Right cardiac atrium (tissue), 5 donors: ENCODE measurements at regions of chr12 and their contacts with region 1.

Region 1: DNA sequence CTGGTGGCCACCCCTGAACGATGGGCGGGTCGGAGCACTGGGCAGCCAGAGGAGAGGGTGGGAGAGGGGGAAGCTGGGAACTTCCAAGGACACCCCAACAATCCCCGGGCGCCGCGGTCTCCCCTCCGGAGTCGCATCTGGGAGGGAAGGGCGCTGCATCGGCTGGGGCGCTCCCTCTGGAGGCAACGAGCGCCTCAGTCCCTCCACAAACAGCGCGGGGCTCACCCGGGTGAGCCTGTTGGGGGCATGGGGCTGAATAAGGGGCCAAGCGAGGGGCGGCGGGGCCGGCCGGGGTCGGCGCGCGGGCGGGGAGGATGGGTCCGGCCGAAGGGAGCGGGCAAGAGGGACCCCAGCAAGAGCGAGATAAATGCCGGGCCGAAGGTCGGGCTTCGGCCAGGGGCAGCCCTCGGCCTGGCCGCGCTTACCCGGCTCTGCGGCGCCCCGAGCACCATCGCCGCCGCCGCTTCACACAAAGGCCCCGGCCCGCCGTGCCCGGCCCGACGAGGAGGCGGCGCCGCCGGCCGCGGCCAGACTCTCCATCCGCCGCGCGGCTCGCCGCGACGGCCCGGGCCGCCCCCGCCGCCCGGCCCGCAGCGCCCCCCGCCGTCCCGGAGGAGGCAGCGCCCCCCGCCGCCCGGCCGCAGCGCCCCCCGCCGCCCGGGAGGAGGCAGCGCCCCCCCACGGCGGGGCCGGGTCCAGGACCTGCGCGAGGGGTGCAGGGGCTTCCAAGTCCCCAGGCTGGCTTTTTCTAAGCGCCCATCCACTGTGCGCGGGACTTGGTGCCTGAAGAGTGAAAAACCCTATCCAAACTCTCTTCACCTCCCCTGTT is at the start of gene ZBTB39:
- DNase-seq: peak; percentile 56 to 88 (median 85)
- ATAC-seq: peak; percentile 76 to 78
- H3K4me3 ChIP-seq: peak within 1 kb of the TSS; percentile 93
- H3K27ac ChIP-seq: peak within 1 kb of the TSS; percentile 68
- H3K4me1 ChIP-seq: peaks cover 3% of the 10 kb centered on the region
- H3K27me3 ChIP-seq: no peaks in the 10 kb centered on the region
- total RNA-seq, gene ZBTB39: 3.7 to 4.5 (median 4.1) TPM

Region 2: DNA sequence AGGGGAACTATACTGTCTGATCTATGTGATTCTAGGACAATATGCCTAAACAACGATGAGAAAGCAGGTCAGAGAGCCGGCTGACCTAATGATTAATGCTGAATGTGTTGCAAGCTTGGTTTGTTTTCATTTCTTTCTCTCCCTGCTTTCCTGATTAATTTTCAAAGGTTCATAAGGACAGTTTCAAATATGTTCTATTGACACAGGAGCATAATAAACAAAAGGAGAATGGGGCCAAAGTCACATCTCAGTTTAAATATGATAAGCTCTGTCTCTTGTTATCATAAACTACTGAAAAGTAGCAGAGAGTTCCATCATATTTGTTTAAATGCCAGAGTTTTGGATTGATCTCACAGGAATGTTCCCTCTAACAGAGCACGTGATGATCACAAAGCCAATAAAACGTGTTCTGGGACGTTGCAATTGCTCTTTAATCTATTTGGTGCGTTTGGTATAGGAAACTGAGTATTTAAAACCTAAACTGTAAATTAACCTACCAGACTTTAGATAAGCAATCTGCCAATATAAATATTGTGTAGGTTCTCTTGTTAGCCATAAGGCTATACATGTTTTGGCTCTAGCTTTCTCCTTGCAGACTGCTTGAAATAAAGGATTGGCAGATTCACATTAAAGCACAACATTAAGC is 246.8 kb before region 1 on chr12:
- intact Hi-C with region 1: loop called in 2 of 4 experiments (anchors 5 kb)
- DNase-seq: no peak
- ATAC-seq: no peak
- H3K4me3 ChIP-seq: no peak overlapping the region
- H3K27ac ChIP-seq: no peak overlapping the region
- H3K4me1 ChIP-seq: no peaks in the 10 kb centered on the region
- H3K27me3 ChIP-seq: no peaks in the 10 kb centered on the region

Region 3: DNA sequence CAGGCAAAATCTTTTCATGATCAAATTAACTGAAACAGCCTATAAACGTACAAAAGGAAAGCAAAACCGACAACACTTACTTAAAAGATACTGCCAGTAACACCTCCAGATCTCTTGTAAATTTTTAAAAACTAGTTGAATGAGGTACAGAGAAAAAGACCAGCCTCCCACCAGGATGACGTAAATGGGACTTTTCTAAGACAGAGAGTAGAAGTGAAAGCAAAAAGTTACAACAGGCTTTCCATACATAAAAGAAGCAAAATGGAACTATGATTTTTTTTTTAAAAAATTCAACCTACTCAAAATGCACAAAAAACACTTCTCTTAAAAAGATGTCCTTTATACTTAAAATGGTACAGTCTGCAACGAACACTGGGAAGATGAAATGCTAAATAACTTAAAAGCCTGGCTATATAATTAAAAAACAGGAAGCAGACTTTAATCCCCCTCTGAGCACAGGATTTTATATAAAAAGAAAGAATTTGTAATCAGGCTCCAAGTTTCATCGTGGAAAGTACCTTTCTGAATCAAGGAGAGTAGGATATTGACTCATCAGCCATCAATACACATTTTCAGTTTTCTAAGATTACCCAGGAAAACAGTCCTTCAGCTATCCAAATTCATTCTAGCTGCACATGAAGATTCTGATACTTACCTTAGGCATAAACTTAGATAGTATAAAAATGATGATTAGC is 57.9 kb after region 1 on chr12:
- intact Hi-C with region 1: loop called in 2 of 4 experiments (anchors 5 kb)
- DNase-seq: no peak
- ATAC-seq: no peak
- H3K4me3 ChIP-seq: no peak overlapping the region
- H3K27ac ChIP-seq: no peak overlapping the region
- H3K4me1 ChIP-seq: no peaks in the 10 kb centered on the region
- H3K27me3 ChIP-seq: no peaks in the 10 kb centered on the region